ENCODE measurements at regions of chr1 and their contacts with region 1.

Region 1: GRCh38 chr1:36565576-36566501 is 83.1 kb upstream of the CSF3R start:
- DNase-seq: no peak
- ATAC-seq: no peak
- H3K4me3 ChIP-seq: no peak overlapping the region
- H3K27ac ChIP-seq: no peak overlapping the region
- H3K4me1 ChIP-seq: no peaks in the 10 kb centered on the region
- H3K27me3 ChIP-seq: no peaks in the 10 kb centered on the region; a peak in 2 of 4 replicates
- CTCF ChIP-seq: no peak
- EP300 ChIP-seq: no peak
- POLR2A ChIP-seq: no peak
- RAD21 ChIP-seq: no peak

Region 2: GRCh38 chr1:36511804-36512798 is 53.7 kb before region 1 on chr1:
- CTCF ChIA-PET with region 1: no interaction called
- POLR2A ChIA-PET with region 1: no interaction called
- RAD21 ChIA-PET with region 1: no interaction called
- SMC1A ChIA-PET with region 1: no interaction called
- in situ Hi-C with region 1: no loop called
- intact Hi-C with region 1: no loop called
- DNase-seq: no peak
- ATAC-seq: no peak
- H3K4me3 ChIP-seq: no peak overlapping the region
- H3K27ac ChIP-seq: no peak overlapping the region
- H3K4me1 ChIP-seq: no peaks in the 10 kb centered on the region
- H3K27me3 ChIP-seq: peaks cover 4% of the 10 kb centered on the region in 2 experiments
- CTCF ChIP-seq: no peak
- EP300 ChIP-seq: no peak
- POLR2A ChIP-seq: no peak
- RAD21 ChIP-seq: no peak

Region 3: GRCh38 chr1:36576118-36576517 is 10.3 kb after region 1 on chr1:
- CTCF ChIA-PET with region 1: interaction called, 10 read pairs
- POLR2A ChIA-PET with region 1: no interaction called
- RAD21 ChIA-PET with region 1: no interaction called
- SMC1A ChIA-PET with region 1: no interaction called
- in situ Hi-C with region 1: no loop called
- intact Hi-C with region 1: no loop called
- DNase-seq: no peak
- ATAC-seq: peak; percentile 97
- H3K4me3 ChIP-seq: no peak overlapping the region
- H3K27ac ChIP-seq: no peak overlapping the region
- H3K4me1 ChIP-seq: no peaks in the 10 kb centered on the region
- H3K27me3 ChIP-seq: peaks cover 0 to 4% of the 10 kb centered on the region in 2 experiments; a peak in 3 of 4 replicates
- CTCF ChIP-seq: peak; percentile 86 to 95 (median 86)
- EP300 ChIP-seq: no peak
- POLR2A ChIP-seq: no peak
- RAD21 ChIP-seq: peak; percentile 74

Region 4: GRCh38 chr1:36609241-36610027 is 43.6 kb after region 1 on chr1:
- CTCF ChIA-PET with region 1: no interaction called
- POLR2A ChIA-PET with region 1: no interaction called
- RAD21 ChIA-PET with region 1: no interaction called
- SMC1A ChIA-PET with region 1: no interaction called
- in situ Hi-C with region 1: no loop called
- intact Hi-C with region 1: no loop called
- DNase-seq: no peak
- ATAC-seq: peak; percentile 97
- H3K4me3 ChIP-seq: no peak overlapping the region
- H3K27ac ChIP-seq: no peak overlapping the region
- H3K4me1 ChIP-seq: no peaks in the 10 kb centered on the region
- H3K27me3 ChIP-seq: no peaks in the 10 kb centered on the region; a peak in 1 of 4 replicates
- CTCF ChIP-seq: peak; percentile 65 to 87 (median 86)
- EP300 ChIP-seq: no peak
- POLR2A ChIP-seq: no peak
- RAD21 ChIP-seq: peak; percentile 61

Measured in GM12878 (cell line).